ENCODE measurements at regions of chr2 and their contacts with region 1.

Region 1: GRCh38 chr2:232438951-232439757 is 16.8 kb upstream of the ALPI start:
- DNase-seq: no peak
- H3K4me3 ChIP-seq: no peak overlapping the region
- CTCF ChIP-seq: peak; percentile 11

Region 2: GRCh38 chr2:231715258-231715997 is 723.7 kb before region 1 on chr2:
- CTCF ChIA-PET with region 1: no interaction called
- POLR2A ChIA-PET with region 1: no interaction called
- DNase-seq: no peak
- H3K4me3 ChIP-seq: no peak overlapping the region
- CTCF ChIP-seq: peak; percentile 75

Region 3: GRCh38 chr2:231925303-231926179 is 513.6 kb before region 1 on chr2:
- CTCF ChIA-PET with region 1: interaction called, 14 read pairs
- POLR2A ChIA-PET with region 1: no interaction called
- DNase-seq: peak; percentile 28
- H3K4me3 ChIP-seq: peak overlapping the region; percentile 46
- CTCF ChIP-seq: peak; percentile 87

Region 4: GRCh38 chr2:232333361-232334270 is 105.5 kb before region 1 on chr2:
- CTCF ChIA-PET with region 1: interaction called, 46 read pairs
- POLR2A ChIA-PET with region 1: no interaction called
- DNase-seq: no peak
- H3K4me3 ChIP-seq: no peak overlapping the region
- CTCF ChIP-seq: peak; percentile 67

Region 5: GRCh38 chr2:232420463-232421188 is 18.5 kb before region 1 on chr2:
- CTCF ChIA-PET with region 1: interaction called, 33 read pairs
- POLR2A ChIA-PET with region 1: no interaction called
- DNase-seq: no peak
- H3K4me3 ChIP-seq: no peak overlapping the region
- CTCF ChIP-seq: no peak

Measured in AG04449 (cell line).